ENCODE measurements at regions of chr21 and their contacts with region 1.

Region 1: GRCh38 chr21:19507682-19508260 is 1104.2 kb upstream of the TMPRSS15 start:
- DNase-seq: peak; percentile 20
- H3K4me3 ChIP-seq: no peak overlapping the region
- H3K27ac ChIP-seq: no peak overlapping the region
- H3K4me1 ChIP-seq: no peaks in the 10 kb centered on the region
- H3K27me3 ChIP-seq: no peaks in the 10 kb centered on the region
- CTCF ChIP-seq: peak; percentile 34; the same call in 1 of the 2 replicates
- EP300 ChIP-seq: no peak
- RAD21 ChIP-seq: peak; percentile 51

Region 2: DNA sequence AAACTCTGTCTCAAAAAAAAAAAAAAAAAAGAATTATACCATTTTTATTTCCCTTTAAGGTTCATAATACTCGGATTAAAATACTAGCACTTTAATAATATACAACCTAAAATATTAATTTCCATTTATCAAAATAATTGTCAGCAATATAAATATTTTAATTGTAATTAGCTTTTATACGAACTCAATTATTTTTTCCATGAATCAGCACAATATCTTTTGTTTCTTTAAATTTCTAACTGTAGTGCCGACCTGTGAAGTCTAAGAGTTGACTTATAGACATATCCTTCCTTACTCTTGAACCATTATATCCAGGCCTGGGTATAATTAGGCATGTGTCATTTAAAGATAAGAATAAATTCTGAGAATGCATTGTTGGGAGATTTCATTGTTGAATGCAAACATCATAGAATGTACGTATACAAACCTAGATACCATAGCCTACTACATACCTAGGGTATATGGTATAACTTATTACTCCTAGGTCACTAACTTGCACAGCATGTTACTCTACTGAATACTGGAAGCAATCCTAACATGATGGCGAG is 107.5 kb before region 1 on chr21:
- CTCF ChIA-PET with region 1: no interaction called
- POLR2A ChIA-PET with region 1: no interaction called
- DNase-seq: no peak
- H3K4me3 ChIP-seq: no peak overlapping the region
- H3K27ac ChIP-seq: no peak overlapping the region
- H3K4me1 ChIP-seq: no peaks in the 10 kb centered on the region
- H3K27me3 ChIP-seq: no peaks in the 10 kb centered on the region
- CTCF ChIP-seq: no peak
- EP300 ChIP-seq: no peak
- RAD21 ChIP-seq: no peak

Region 3: DNA sequence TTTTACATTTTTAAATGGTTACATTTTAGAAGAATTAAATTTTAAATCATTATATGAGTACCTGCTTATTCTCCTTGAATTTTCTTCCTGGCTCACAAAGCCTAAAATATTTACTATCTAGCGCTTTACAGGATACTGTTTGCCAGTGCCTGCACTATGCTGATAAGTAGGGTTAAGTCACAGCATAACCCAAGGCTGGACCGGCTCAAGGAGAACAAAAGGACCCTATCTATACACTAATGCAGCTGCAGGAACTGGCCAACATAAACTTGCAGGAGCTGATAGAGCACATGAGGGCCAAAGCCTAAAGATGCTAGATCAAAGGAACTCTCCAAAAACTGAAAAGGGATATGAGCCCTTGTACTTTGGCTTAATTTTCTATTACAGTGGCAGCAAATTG is 17.3 kb before region 1 on chr21:
- CTCF ChIA-PET with region 1: interaction called, 11 read pairs
- POLR2A ChIA-PET with region 1: no interaction called
- DNase-seq: no peak
- H3K4me3 ChIP-seq: no peak overlapping the region
- H3K27ac ChIP-seq: no peak overlapping the region
- H3K4me1 ChIP-seq: no peaks in the 10 kb centered on the region
- H3K27me3 ChIP-seq: no peaks in the 10 kb centered on the region
- CTCF ChIP-seq: no peak
- EP300 ChIP-seq: no peak
- RAD21 ChIP-seq: no peak

Region 4: DNA sequence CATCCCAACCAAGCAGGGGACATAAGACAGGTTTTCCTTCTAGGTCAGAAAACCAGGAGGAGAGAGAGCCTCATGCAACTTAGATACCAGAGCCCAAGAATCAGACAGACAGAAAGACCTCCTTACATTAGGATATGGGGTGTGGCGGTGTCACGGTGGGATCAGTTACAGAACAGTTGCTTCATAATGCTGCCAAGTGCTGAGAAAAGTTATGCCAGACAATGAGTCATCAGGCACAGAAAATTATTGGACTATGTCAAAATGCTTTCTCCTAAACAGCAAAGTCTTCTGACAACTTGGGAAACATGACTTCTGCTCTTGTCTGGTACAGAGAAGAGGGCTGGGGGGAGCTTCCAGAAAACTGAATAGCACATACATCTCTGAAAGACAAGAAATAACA is 16.0 kb after region 1 on chr21:
- CTCF ChIA-PET with region 1: interaction called, 22 read pairs
- POLR2A ChIA-PET with region 1: no interaction called
- DNase-seq: no peak
- H3K4me3 ChIP-seq: no peak overlapping the region
- H3K27ac ChIP-seq: no peak overlapping the region
- H3K4me1 ChIP-seq: no peaks in the 10 kb centered on the region
- H3K27me3 ChIP-seq: no peaks in the 10 kb centered on the region
- CTCF ChIP-seq: no peak
- EP300 ChIP-seq: no peak
- RAD21 ChIP-seq: no peak

Region 5: GRCh38 chr21:19565570-19565969 is 57.8 kb after region 1 on chr21:
- CTCF ChIA-PET with region 1: no interaction called
- POLR2A ChIA-PET with region 1: no interaction called
- DNase-seq: no peak
- H3K4me3 ChIP-seq: no peak overlapping the region
- H3K27ac ChIP-seq: no peak overlapping the region
- H3K4me1 ChIP-seq: no peaks in the 10 kb centered on the region
- H3K27me3 ChIP-seq: no peaks in the 10 kb centered on the region
- CTCF ChIP-seq: no peak
- EP300 ChIP-seq: no peak
- RAD21 ChIP-seq: no peak

Region 6: DNA sequence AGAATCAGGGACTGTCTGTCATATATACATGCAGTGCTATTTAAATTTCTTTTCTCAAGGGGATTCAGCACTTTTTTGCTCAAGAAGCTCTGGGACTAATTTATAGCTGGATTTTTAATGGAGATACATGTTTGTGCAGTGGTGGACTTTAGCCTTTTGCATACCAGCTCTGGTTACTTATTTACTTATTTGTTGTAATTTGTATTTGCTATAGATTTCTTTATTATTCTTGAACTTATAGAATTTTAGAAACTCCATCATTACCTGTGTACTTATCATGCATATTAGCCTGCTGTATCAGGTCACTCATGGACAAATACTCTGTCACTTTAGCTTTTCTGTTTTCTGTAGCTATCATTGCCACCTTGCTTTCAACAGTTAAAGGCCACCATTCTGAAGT is 192.7 kb after region 1 on chr21:
- CTCF ChIA-PET with region 1: no interaction called
- POLR2A ChIA-PET with region 1: no interaction called
- DNase-seq: no peak
- H3K4me3 ChIP-seq: no peak overlapping the region
- H3K27ac ChIP-seq: no peak overlapping the region
- H3K4me1 ChIP-seq: no peaks in the 10 kb centered on the region
- H3K27me3 ChIP-seq: no peaks in the 10 kb centered on the region
- CTCF ChIP-seq: no peak
- EP300 ChIP-seq: no peak
- RAD21 ChIP-seq: no peak

Region 7: GRCh38 chr21:19935467-19935866 is 427.7 kb after region 1 on chr21:
- CTCF ChIA-PET with region 1: no interaction called
- POLR2A ChIA-PET with region 1: no interaction called
- DNase-seq: no peak
- H3K4me3 ChIP-seq: no peak overlapping the region
- H3K27ac ChIP-seq: no peak overlapping the region
- H3K4me1 ChIP-seq: no peaks in the 10 kb centered on the region
- H3K27me3 ChIP-seq: no peaks in the 10 kb centered on the region
- CTCF ChIP-seq: no peak
- EP300 ChIP-seq: no peak
- RAD21 ChIP-seq: no peak

Measured in SK-N-SH (cell line).